ENCODE measurements at regions of chr6 and their contacts with region 1.

Region 1: DNA sequence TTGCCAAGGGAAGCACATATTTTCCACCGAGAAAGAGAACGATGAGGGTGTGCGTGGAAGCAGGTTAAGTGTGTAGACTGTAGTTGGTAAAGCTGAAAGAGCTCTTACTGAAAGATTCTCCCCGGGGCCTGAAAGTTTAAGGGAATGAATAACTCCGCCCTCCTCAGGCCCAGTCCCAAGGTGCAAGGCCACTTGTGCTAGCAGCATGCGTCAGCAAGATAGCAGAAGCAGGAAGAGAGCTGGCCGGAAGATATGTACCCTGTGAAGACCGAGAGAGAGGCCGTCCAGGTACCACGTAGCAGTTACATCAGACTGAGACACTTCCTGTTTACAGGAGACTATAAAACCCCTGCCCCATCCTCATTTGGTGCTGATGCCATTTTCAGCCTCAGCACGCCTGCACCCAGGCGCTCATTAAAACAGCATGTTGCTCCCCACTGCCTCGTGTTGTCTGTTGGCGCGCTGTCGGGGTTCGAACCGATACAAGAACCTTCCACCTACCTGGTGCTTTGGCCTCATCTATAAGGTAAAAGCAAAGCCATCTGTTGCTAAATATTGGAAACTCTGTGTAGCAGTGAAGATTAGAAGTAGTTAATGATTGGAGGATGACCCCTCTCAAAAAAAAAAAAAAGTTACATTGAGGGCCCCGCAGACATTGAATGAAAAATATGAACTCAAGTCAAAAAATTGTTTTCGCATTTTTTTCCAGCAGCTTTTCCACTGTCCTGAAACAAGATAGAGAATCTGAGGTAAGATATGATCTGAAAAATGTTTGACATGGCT is 18.6 kb upstream of the FAM135A start:
- DNase-seq: no peak
- ATAC-seq: no peak
- H3K4me3 ChIP-seq: no peak overlapping the region
- H3K27ac ChIP-seq: no peak overlapping the region
- H3K4me1 ChIP-seq: no peaks in the 10 kb centered on the region
- H3K27me3 ChIP-seq: no peaks in the 10 kb centered on the region; a peak in 2 of 4 replicates
- CTCF ChIP-seq: no peak
- EP300 ChIP-seq: no peak
- POLR2A ChIP-seq: no peak
- RAD21 ChIP-seq: no peak

Region 2: DNA sequence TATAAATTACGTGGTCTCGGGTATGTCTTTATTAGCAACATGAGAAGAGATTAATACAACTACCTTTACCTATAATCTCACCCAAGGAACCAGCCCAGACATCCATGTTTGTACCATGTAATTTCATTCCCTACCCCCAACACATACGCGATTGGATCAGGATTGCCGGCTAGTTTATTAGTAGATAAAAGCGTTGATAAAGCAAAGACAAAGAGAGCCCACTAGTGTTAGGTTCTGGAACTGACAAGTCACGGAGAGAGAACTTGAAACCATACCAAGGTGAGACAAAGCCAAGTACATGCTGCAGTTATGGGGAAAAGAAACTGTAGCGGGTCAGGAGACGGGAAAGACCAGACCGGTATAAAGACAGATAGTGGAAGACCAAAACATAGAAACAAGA is 18.8 kb before region 1 on chr6:
- CTCF ChIA-PET with region 1: interaction called, 13 read pairs
- POLR2A ChIA-PET with region 1: no interaction called
- RAD21 ChIA-PET with region 1: no interaction called
- SMC1A ChIA-PET with region 1: no interaction called
- in situ Hi-C with region 1: no loop called
- intact Hi-C with region 1: loop called (anchors 2 kb)
- DNase-seq: no peak
- ATAC-seq: 0 out of 3 replicates have a peak, but pooled peaks have one; percentile 15
- H3K4me3 ChIP-seq: no peak overlapping the region
- H3K27ac ChIP-seq: no peak overlapping the region
- H3K4me1 ChIP-seq: no peaks in the 10 kb centered on the region; the same call in 1 of the 2 replicates
- H3K27me3 ChIP-seq: no peaks in the 10 kb centered on the region; a peak in 1 of 4 replicates
- CTCF ChIP-seq: peak; percentile 7 to 37 (median 34); a peak in 4 of 6 replicates
- EP300 ChIP-seq: no peak
- POLR2A ChIP-seq: no peak
- RAD21 ChIP-seq: peak; percentile 11; the same call in 1 of the 2 replicates

Measured in GM12878 (cell line).